Astrocyte of the cerebellum (primary cell): ENCODE measurements at regions of chr3 and their contacts with region 1.

Region 1: GRCh38 chr3:66822186-66823008 is 175.7 kb upstream of the KBTBD8 start:
- DNase-seq: peak; percentile 49
- H3K4me3 ChIP-seq: no peak overlapping the region
- CTCF ChIP-seq: peak; percentile 84

Region 2: DNA sequence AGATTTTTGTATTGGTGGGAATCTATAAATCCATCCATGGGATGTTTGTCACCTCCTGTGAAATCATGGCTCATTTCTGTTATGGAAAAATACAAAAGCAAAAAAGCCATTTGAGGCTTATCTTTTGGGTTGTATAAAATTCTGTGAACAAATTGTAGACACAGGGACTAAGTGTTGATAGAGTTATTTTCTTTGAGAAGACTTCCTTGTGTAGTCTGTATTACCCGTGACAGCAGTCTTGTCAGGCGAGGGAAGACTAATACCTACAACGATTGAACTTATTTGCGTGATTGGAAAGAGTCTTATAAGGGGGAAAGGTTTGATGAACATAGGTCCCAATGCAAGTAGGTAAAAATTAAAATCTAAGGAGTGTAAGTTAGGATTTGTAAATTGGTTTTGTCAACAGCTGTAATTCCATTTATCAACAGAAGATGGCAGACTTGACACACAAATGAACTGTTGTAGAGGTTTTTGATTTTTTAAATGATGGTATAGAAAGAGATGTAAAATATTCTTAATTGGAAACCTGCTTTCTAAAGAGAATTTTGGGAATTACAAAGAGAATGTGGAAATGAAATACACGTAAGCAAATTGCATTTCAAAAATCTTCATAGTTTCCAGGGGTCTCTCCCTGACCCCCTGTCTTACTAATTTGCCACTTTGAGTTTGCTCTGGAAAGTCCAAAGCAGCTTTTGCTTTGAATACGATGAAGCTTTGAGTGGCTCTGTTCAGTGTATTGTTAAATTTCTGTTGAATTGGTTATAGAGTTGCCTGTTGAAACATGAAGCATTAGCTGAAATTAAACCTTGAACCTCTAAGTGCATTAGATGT is 568.4 kb before region 1 on chr3:
- in situ Hi-C with region 1: loop called (anchors 25 kb)
- DNase-seq: peak; percentile 52
- H3K4me3 ChIP-seq: no peak overlapping the region
- CTCF ChIP-seq: peak; percentile 42

Region 3: GRCh38 chr3:66407611-66408218 is 414.7 kb before region 1 on chr3:
- in situ Hi-C with region 1: loop called (anchors 5 kb)
- DNase-seq: no peak
- H3K4me3 ChIP-seq: no peak overlapping the region
- CTCF ChIP-seq: peak; percentile 93